ENCODE measurements at regions of chr4 and their contacts with region 1.

Region 1: DNA sequence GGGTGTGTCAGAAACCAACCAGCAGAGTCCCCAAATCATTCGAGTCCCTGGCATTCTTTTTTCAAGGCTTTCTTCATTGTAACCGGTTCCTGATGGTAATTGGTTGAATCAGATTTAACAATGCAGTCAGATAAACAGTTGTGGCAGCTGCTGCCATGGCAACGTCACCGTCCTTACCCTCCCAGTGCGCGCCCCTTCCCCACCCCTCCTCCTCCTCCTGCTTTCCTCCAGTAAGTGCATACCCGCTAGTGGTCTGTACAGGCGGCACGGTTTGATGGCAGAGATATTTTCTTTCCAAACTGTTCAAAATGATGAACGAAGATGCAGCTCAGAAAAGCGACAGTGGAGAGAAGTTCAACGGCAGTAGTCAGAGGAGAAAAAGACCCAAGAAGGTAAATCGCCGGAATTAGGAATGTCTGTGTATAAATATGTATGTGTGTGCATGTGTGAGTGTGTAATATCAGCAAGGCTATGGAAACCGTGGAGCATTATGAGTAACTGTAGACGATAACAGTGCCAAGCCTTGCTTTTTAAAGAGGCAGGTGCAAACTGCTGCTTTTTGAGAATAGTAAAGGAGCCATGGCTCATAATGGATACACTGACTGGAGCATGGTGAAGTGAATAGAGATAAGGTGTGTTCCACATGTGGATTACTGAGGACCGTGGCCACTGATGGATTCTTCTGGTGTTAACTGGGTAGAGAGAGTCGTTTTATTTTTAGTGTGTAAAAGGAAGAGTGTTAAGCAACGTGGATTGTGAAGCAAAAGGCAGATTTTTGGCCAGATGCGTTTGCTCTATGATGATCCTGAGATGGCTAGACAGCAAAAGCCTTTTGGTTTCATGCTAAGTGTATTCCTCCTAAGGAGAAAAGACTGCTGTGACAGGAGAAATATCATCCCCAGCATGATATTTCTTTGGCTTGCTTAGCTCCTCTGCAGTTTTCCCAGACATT is at the start of gene ANK2:
- DNase-seq: no peak
- H3K4me3 ChIP-seq: no peak within 1 kb of the TSS
- H3K27ac ChIP-seq: no peak within 1 kb of the TSS
- H3K4me1 ChIP-seq: no peaks in the 10 kb centered on the region
- H3K27me3 ChIP-seq: no peaks in the 10 kb centered on the region
- CTCF ChIP-seq: no peak
- POLR2A ChIP-seq: no peak
- total RNA-seq, gene ANK2: 22.0 to 145 (median 36.7) TPM

Region 2: GRCh38 chr4:112546476-112546875 is 503.2 kb before region 1 on chr4:
- intact Hi-C with region 1: no loop called
- DNase-seq: no peak
- H3K4me3 ChIP-seq: no peak overlapping the region
- H3K27ac ChIP-seq: no peak overlapping the region
- H3K4me1 ChIP-seq: no peaks in the 10 kb centered on the region
- H3K27me3 ChIP-seq: no peaks in the 10 kb centered on the region
- CTCF ChIP-seq: no peak
- POLR2A ChIP-seq: no peak

Region 3: GRCh38 chr4:113222471-113222870 is 172.8 kb after region 1 on chr4:
- intact Hi-C with region 1: no loop called
- DNase-seq: no peak
- H3K4me3 ChIP-seq: no peak overlapping the region
- H3K27ac ChIP-seq: no peak overlapping the region
- H3K4me1 ChIP-seq: no peaks in the 10 kb centered on the region
- H3K27me3 ChIP-seq: no peaks in the 10 kb centered on the region
- CTCF ChIP-seq: no peak
- POLR2A ChIP-seq: no peak

Region 4: GRCh38 chr4:114827651-114828050 is 1778.0 kb after region 1 on chr4:
- intact Hi-C with region 1: loop called (anchors 5 kb)
- DNase-seq: no peak
- H3K4me3 ChIP-seq: no peak overlapping the region
- H3K27ac ChIP-seq: no peak overlapping the region
- H3K4me1 ChIP-seq: no peaks in the 10 kb centered on the region
- H3K27me3 ChIP-seq: no peaks in the 10 kb centered on the region
- CTCF ChIP-seq: no peak
- POLR2A ChIP-seq: no peak